ENCODE measurements at regions of chr1 and their contacts with region 1.

Region 1: DNA sequence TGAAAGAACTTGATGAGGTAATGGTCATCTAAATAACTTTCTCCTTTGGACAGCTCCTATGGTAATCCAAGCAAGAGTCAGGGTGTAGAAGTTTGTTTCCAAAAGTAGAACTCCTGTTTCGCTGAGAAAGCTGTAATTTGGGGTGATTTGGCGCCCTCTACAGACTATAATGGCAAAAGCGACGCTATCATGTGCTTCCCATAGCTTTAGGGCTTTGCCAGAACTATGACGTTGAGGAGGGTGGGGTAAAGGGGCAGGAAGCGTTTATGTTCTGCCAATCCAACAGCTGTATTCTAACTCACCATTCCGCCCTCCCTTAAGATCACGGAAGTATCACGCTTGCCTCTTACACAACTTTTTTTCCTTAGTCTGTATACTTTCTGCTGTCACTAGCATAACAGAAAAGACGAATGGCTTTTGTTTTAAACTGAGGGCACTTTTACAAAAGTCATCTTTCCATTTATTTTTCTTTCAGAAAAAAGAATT is at the start of gene FMO4:
- DNase-seq: peak; percentile 82 to 87
- ATAC-seq: peak; percentile 100
- H3K4me3 ChIP-seq: peak within 1 kb of the TSS; percentile 14 to 50 (median 30)
- H3K27ac ChIP-seq: peak within 1 kb of the TSS; percentile 61 to 72 (median 66)
- H3K4me1 ChIP-seq: peaks cover 0 to 12% of the 10 kb centered on the region in 2 donors
- H3K27me3 ChIP-seq: no peaks in the 10 kb centered on the region
- CTCF ChIP-seq: peak; percentile 46 to 69 (median 62)
- POLR2A ChIP-seq: peak in 1 of 2 donors; percentile 34
- total RNA-seq, gene FMO4: 0.36 to 2.9 (median 0.94) TPM

Region 2: DNA sequence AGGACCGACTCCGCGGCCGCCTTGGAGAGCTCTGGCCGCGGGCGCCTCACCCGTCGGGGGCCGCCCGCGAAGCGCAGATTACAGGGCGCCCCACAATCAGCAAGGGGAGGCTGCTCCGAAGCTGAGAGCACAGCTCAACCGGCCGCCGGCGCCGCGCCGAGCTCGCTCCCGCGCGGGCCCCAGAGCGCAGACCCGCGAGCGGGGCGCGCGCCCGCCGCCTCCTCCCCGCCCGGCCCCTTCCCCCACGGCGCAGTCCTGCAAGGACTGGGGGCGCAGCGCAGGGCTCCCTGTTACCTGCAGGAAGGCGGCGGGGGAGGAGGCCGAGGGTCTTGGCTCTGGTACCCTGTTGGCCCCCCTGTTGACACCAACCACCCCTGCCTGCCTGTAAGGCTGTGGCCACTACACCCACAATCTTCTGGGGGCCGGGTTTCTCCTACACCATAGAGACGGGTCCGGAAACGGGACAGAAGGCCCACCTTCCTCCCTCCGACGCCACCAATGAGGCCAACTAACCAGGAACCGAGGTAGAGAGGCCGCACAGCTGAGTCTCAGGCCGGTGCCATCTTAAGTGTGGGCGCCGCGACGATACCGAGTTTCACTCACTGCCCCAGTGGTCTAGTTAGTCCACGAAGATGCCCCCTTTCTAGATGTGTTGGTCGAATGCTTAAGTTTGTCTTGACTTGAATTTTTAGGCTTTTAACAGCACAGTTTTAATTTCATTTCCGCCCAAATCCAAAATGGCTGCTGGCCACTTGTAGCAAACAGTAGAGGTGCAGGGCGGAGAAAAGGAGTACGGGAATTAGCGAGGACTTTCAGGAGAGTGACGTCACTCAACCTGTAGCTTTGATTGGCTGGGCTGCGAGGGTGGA is 1420.2 kb before region 1 on chr1 and contains the start of gene SCYL3:
- in situ Hi-C with region 1: no loop called
- intact Hi-C with region 1: loop called (anchors 10 kb)
- DNase-seq: peak; percentile 94
- ATAC-seq: peak; percentile 98 to 99
- H3K4me3 ChIP-seq: peak within 1 kb of the TSS; percentile 74 to 99 (median 96)
- H3K27ac ChIP-seq: peak within 1 kb of the TSS; percentile 87 to 98 (median 94)
- H3K4me1 ChIP-seq: peaks cover 11 to 24% of the 10 kb centered on the region in 2 donors
- H3K27me3 ChIP-seq: peaks cover 0 to 3% (median 0%) of the 10 kb centered on the region in 3 donors
- CTCF ChIP-seq: no peak
- POLR2A ChIP-seq: peak; percentile 48 to 63
- total RNA-seq, gene SCYL3: 6.2 to 14.3 (median 12.8) TPM

Region 3: GRCh38 chr1:170967042-170967910 is 346.6 kb before region 1 on chr1:
- in situ Hi-C with region 1: loop called in 3 of 4 experiments (anchors 25 kb)
- intact Hi-C with region 1: loop called (anchors 1 kb)
- DNase-seq: no peak
- ATAC-seq: peak in 1 of 2 donors; percentile 55
- H3K4me3 ChIP-seq: no peak overlapping the region
- H3K27ac ChIP-seq: no peak overlapping the region
- H3K4me1 ChIP-seq: no peaks in the 10 kb centered on the region
- H3K27me3 ChIP-seq: no peaks in the 10 kb centered on the region
- CTCF ChIP-seq: peak in 4 of 5 experiments; percentile 16 to 54 (median 26)
- POLR2A ChIP-seq: no peak

Region 4: DNA sequence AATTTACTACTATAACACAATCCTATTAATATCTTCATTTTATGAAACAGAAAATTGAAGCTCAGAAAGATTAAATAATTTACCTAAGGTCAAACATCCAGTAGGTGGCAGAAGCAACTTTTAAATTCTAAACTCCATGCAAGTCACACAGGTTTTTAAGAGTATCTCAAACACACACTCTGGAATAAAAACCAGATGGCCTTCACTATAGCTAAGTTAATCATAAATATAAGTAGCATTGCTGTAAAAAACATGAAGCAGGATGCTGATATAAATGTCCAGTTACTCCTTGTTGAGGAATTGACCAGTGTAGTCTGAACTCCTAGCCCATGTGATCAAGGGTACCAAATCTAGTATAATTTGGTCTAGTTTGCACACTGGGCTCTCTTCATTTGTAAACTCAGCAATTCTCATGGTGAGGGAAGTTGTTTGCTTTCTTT is 232.5 kb before region 1 on chr1:
- in situ Hi-C with region 1: no loop called
- intact Hi-C with region 1: loop called (anchors 1 kb)
- DNase-seq: no peak
- ATAC-seq: peak in 1 of 2 donors; percentile 24
- H3K4me3 ChIP-seq: no peak overlapping the region
- H3K27ac ChIP-seq: peak overlapping the region; percentile 13 to 52 (median 49)
- H3K4me1 ChIP-seq: peaks cover 0 to 4% of the 10 kb centered on the region in 2 donors
- H3K27me3 ChIP-seq: no peaks in the 10 kb centered on the region
- CTCF ChIP-seq: peak in 3 of 5 experiments; percentile 22 to 43 (median 29)
- POLR2A ChIP-seq: no peak

Region 5: DNA sequence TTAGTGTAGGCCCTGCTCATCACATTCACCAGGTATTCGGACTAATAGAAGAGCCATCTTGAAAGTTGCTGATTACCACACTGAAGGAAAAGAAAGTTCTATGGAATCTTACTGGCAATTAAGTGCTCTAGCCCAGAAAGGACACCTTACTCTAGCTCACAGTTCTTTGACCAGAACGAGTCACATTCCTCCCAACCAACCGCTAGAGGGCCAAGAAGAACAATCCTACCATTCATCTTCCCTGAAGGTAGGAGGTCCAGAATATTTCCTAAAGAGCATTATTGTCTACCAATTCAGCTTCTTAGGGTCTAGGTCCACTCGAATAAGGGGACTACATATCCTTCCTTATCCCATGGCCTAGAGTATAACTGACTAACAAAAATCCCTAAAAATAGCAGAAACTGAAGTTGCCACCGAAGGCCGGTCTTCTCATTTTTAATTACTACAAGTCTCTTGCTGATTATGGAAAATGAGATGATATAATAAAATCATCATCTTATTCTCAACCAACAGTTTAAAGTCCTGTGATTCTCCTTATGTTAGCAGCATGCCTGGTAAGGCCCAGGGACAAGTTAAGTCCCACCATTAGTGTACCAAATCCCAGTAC is 68.3 kb before region 1 on chr1:
- in situ Hi-C with region 1: loop called in 1 of 4 experiments (anchors 10 kb)
- intact Hi-C with region 1: loop called (anchors 2 kb)
- DNase-seq: no peak
- ATAC-seq: peak in 1 of 2 donors; percentile 42
- H3K4me3 ChIP-seq: no peak overlapping the region
- H3K27ac ChIP-seq: no peak overlapping the region
- H3K4me1 ChIP-seq: no peaks in the 10 kb centered on the region
- H3K27me3 ChIP-seq: no peaks in the 10 kb centered on the region
- CTCF ChIP-seq: peak in 4 of 5 experiments; percentile 14 to 49 (median 39)
- POLR2A ChIP-seq: no peak